ENCODE measurements at regions of chr3 and their contacts with region 1.

Region 1: GRCh38 chr3:108552267-108553159 is 36.7 kb downstream of the CIP2A start:
- DNase-seq: peak in 7 of 42 donors; percentile 4 to 50 (median 8)

Region 2: GRCh38 chr3:108088697-108089096 is 463.8 kb before region 1 on chr3:
- intact Hi-C with region 1: no loop called
- DNase-seq: no peak

Region 3: DNA sequence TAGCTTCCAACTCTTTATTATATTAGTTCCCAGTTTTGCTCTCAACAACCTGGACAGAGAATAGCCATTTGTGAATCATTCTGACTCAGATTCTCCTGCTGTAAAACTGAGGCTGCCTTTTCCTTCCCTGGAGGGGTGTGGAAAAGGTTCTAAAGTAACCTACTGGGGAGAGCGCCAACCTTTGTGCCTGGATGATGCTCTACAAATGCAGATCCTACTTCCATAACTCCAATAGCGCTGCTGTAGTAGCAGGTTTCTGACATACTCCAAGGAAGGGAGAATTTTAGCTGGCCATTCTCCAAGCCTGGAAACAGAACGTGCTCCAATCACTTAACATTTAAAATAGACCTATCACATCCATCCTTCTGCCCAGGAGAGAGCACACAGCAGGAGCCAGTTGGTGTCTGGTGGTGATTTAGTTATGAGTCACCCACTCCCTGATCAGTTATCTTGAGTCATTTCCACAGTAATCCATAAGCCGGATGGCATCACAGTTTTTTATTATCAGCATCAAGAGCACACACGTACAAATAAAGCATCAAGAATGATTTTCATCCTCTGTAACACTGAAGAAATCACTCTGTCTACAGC is 80.4 kb before region 1 on chr3:
- intact Hi-C with region 1: no loop called
- DNase-seq: peak in 4 of 42 donors; percentile 10 to 42 (median 16)

Region 4: GRCh38 chr3:108489771-108490170 is 62.7 kb before region 1 on chr3:
- intact Hi-C with region 1: loop called (anchors 2 kb)
- DNase-seq: peak in 25 of 42 donors; percentile 19 to 85 (median 51)

Measured in head of caudate nucleus (tissue), 42 donors.